Activated CD4-positive, alpha-beta T cell treated with anti-CD3 and anti-CD28 coated beads, Interleukin-2, amount 10 ng/mL, durations not matched to agents 7 days and 5 days (primary cell): ENCODE measurements at regions of chr2 and their contacts with region 1.

Region 1: GRCh38 chr2:201712726-201713125 is 14.3 kb upstream of the MPP4 start:
- DNase-seq: no peak
- H3K4me3 Mint-ChIP-seq: no peak overlapping the region
- H3K27ac Mint-ChIP-seq: no peak overlapping the region
- H3K4me1 Mint-ChIP-seq: no peaks in the 10 kb centered on the region
- H3K27me3 Mint-ChIP-seq: no peaks in the 10 kb centered on the region

Region 2: DNA sequence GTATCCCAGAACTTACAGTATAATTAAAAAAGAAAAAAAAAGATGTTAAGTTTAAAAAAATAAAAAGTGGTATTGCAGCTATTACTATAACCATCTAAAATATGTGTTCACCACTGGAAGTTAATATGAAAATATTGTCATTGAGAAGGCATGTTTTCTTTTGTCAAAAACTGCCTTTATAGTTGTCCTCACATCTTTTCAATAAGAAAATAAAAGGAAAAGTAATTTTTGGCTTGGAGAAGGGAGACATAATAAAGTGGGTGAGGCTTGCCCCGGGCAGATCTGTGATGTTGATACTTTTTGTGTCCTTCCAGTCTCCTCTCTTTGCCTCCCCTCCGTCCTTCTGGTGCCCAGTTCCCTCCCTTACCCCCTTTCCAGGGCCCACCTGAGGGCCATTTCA is 39.2 kb before region 1 on chr2:
- CTCF ChIA-PET with region 1: interaction called, 10 read pairs
- POLR2A ChIA-PET with region 1: no interaction called
- DNase-seq: no peak
- H3K4me3 Mint-ChIP-seq: no peak overlapping the region
- H3K27ac Mint-ChIP-seq: no peak overlapping the region
- H3K4me1 Mint-ChIP-seq: peaks cover 4% of the 10 kb centered on the region
- H3K27me3 Mint-ChIP-seq: peaks cover 13% of the 10 kb centered on the region